ENCODE measurements at regions of chr4 and their contacts with region 1.

Region 1: DNA sequence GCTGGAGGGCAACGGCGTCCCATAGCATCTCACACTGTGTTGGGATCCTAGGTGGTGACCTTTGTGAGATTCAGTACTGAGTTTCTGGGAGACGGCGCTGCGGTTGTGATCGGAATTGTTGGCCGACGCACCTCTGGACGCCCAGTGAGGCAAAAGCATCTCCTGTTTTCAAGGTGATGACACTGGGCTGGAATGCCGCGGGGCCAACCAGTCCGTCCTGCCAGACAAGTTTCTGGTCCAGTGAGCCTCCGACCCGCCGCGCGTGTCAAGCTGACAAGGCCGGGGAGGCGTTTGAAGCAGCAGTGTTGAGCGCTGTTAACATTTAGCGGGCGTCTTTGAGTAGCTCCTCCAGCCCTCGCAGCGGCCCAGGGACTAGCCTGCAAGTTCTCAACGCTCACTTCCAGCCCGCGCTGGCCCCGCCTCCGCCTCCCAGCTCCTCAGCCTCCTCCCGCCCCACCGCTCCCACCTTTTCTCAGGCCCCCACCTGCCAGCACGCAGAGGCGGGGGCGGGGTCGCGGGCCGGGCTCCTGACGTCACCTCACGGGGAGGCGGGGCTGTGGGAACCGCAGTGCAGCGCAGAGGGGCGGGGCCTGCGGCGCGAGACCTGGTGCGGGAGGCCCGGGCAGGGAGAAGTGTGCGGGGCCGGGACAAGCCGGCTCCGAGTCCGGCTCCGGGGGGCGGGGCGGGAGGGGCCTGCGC is 476 bp upstream of the CDS1 start:
- DNase-seq: peak; percentile 75 to 95 (median 86)
- ATAC-seq: peak; percentile 86
- H3K4me3 ChIP-seq: peak overlapping the region; percentile 44 to 64
- H3K4me3 Mint-ChIP-seq: peak overlapping the region; percentile 80
- H3K27ac ChIP-seq: no peak overlapping the region
- H3K27ac Mint-ChIP-seq: peak overlapping the region; percentile 60
- H3K4me1 ChIP-seq: peaks cover 16% of the 10 kb centered on the region
- H3K4me1 Mint-ChIP-seq: peaks cover 15% of the 10 kb centered on the region
- H3K27me3 ChIP-seq: peaks cover 0 to 15% of the 10 kb centered on the region in 2 experiments
- H3K27me3 Mint-ChIP-seq: peaks cover 38% of the 10 kb centered on the region
- CTCF ChIP-seq: no peak

Region 2: GRCh38 chr4:82989575-82990429 is 1592.6 kb before region 1 on chr4:
- CTCF ChIA-PET with region 1: no interaction called
- POLR2A ChIA-PET with region 1: no interaction called
- intact Hi-C with region 1: loop called in 1 of 2 experiments (anchors 10 kb)
- DNase-seq: peak in 2 of 9 experiments; percentile 45 to 51
- ATAC-seq: peak; percentile 64
- H3K4me3 ChIP-seq: no peak overlapping the region
- H3K4me3 Mint-ChIP-seq: peak overlapping the region; percentile 6
- H3K27ac ChIP-seq: peak overlapping the region in 1 of 2 experiments; percentile 71
- H3K27ac Mint-ChIP-seq: peak overlapping the region; percentile 76
- H3K4me1 ChIP-seq: peaks cover 13% of the 10 kb centered on the region
- H3K4me1 Mint-ChIP-seq: peaks cover 28% of the 10 kb centered on the region
- H3K27me3 ChIP-seq: no peaks in the 10 kb centered on the region
- H3K27me3 Mint-ChIP-seq: no peaks in the 10 kb centered on the region
- CTCF ChIP-seq: no peak

Region 3: DNA sequence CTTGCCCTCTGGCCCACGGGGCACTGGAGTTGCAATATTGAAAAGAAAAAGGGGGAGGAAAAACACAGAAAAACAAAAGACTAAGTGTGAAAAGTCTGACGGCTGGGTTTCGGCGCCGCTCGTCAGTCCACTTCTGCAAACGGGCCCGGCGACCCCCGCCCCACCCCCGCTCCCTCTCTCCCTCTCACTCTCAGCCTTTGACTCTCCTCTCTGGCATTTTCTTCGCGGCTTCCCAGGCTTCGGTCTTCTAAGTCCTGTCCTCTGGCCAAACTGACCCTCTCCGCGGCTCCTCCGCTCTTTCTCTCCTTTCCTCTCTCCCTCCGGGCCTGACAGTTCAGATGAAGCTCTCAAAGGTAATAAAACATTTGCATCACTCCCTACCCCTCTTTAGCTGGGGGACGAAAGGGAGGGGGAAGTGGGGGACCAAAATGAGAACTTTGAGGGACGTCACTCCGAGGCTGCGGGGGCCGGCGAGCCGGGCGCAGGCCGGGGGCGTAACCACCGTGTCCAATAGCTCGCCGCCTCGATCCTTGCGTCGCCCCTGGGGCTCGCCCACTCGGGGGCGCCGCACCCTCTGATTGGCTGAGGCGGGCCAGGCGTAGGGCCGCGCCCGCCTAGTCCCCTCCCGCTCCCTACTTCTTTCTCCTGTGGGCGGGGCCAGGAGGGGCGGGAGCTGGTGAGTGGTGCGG is 83.4 kb before region 1 on chr4 and contains the start of gene NKX6-1:
- CTCF ChIA-PET with region 1: no interaction called
- POLR2A ChIA-PET with region 1: no interaction called
- intact Hi-C with region 1: loop called in 1 of 2 experiments (anchors 5 kb)
- DNase-seq: no peak
- ATAC-seq: no peak
- H3K4me3 ChIP-seq: peak within 1 kb of the TSS; percentile 24 to 50
- H3K4me3 Mint-ChIP-seq: peak within 1 kb of the TSS; percentile 78
- H3K27ac ChIP-seq: no peak within 1 kb of the TSS
- H3K27ac Mint-ChIP-seq: no peak within 1 kb of the TSS
- H3K4me1 ChIP-seq: peaks cover 26% of the 10 kb centered on the region
- H3K4me1 Mint-ChIP-seq: peaks cover 19% of the 10 kb centered on the region
- H3K27me3 ChIP-seq: peaks cover 47 to 86% of the 10 kb centered on the region in 2 experiments
- H3K27me3 Mint-ChIP-seq: peaks cover 82% of the 10 kb centered on the region
- CTCF ChIP-seq: no peak
- total RNA-seq, gene NKX6-1: not detected